Gastrocnemius medialis (tissue), 4 donors: ENCODE measurements at regions of chr1 and their contacts with region 1.

Region 1: DNA sequence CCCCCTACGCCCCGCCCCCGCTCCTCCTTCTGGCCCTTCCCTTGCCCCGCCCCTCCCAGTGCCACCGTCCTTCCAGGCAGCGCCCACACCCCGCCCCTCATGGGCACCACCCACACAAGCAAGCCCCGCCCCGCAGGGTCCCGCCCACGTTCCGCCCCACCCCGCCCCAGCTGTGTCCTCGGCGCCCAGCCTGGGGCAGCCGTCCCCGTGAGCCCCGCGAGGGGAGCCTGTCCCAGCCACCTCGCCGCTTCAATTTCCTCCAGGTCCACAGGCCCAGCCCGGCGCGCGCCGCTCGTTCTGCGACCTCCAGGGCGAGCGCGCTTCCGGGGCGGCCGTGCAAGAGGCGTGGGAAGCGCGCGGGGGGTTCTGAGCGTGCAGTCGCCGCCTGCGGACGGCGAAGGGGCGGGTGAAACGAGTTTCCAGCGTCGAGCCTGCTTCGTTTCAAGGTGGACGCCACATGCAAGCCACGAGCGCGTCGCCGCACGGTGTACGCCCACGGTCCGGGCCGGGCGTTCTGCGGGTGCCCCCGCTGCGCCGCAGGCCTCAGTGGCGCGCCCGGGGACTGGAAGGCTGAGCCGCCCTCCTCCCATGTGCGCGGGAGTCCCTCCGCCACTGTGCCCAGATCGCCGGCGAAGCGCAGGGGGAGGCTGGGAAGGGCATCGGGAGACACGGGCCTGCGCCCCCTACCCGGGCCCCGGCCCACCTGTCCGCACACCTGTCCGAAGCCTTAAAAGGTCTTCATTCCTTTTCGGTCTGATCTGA is 10.8 kb upstream of the FAAP20 start:
- DNase-seq: peak; percentile 96 to 98
- ATAC-seq: peak; percentile 77 to 83
- H3K4me3 ChIP-seq: peak overlapping the region; percentile 51 to 76 (median 66)
- H3K27ac ChIP-seq: peak overlapping the region; percentile 73 to 88 (median 81)
- H3K4me1 ChIP-seq: peaks cover 12 to 30% of the 10 kb centered on the region in 2 donors
- H3K27me3 ChIP-seq: no peaks in the 10 kb centered on the region
- CTCF ChIP-seq: peak in 3 of 5 experiments; percentile 17 to 35 (median 34)
- POLR2A ChIP-seq: peak; percentile 37 to 44

Region 2: DNA sequence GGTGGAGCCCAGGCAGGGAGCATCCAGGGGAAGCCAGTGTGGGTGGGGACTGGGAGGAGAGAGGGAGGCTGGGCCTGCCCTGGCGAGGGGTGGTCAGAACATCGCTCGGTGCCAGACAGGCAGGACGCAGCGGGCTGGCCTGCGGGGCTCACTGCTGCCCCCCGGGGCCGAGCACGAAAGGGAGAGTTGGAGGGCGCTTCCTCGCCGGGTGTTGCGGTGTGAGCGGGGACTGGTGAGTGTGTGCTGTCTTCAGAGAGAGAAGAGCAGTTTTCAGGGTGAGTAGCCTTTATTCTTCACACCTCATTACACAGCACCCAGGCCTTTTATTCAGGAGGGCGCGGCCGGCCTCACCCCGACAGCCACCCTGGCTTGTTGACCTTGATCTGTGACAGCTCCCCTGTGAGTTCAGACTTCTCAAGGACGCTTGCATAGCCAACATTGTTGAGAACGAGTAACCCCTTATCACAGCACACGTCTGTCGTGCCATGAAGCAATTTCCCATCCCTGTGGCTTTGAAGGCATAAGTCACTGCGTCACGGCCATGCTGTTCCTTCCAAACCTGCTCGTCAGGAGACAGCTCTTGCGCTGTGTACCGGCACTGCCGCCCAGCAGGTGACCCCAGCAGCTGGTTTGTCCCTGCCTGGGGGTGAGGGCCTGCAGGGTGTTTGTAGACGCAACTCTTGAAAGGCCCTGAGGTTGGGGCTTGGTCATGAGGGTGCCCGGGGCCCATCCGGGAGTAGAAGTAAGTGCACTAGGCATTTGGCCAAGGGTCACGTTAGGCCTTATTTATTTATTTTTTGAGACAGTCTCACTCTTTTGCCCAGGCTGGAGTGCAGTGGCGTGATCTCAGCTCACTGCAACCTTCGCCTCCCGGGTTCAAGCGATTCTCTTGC is 100.5 kb before region 1 on chr1:
- in situ Hi-C with region 1: no loop called
- intact Hi-C with region 1: no loop called
- DNase-seq: no peak
- ATAC-seq: no peak
- H3K4me3 ChIP-seq: no peak overlapping the region
- H3K27ac ChIP-seq: no peak overlapping the region
- H3K4me1 ChIP-seq: no peaks in the 10 kb centered on the region
- H3K27me3 ChIP-seq: peaks cover 8 to 26% (median 25%) of the 10 kb centered on the region in 3 donors
- CTCF ChIP-seq: no peak
- POLR2A ChIP-seq: no peak

Region 3: GRCh38 chr1:2227346-2228153 is 22.2 kb after region 1 on chr1:
- in situ Hi-C with region 1: no loop called
- intact Hi-C with region 1: loop called (anchors 1 kb)
- DNase-seq: peak; percentile 95
- ATAC-seq: peak; percentile 78 to 80
- H3K4me3 ChIP-seq: peak overlapping the region; percentile 67 to 92 (median 78)
- H3K27ac ChIP-seq: peak overlapping the region; percentile 92 to 100 (median 98)
- H3K4me1 ChIP-seq: peaks cover 32 to 33% of the 10 kb centered on the region in 2 donors
- H3K27me3 ChIP-seq: no peaks in the 10 kb centered on the region
- CTCF ChIP-seq: peak in 3 of 5 experiments; percentile 14 to 51 (median 31)
- POLR2A ChIP-seq: peak; percentile 85 to 90